BJ (cell line): ENCODE measurements at regions of chr7 and their contacts with region 1.

Region 1: DNA sequence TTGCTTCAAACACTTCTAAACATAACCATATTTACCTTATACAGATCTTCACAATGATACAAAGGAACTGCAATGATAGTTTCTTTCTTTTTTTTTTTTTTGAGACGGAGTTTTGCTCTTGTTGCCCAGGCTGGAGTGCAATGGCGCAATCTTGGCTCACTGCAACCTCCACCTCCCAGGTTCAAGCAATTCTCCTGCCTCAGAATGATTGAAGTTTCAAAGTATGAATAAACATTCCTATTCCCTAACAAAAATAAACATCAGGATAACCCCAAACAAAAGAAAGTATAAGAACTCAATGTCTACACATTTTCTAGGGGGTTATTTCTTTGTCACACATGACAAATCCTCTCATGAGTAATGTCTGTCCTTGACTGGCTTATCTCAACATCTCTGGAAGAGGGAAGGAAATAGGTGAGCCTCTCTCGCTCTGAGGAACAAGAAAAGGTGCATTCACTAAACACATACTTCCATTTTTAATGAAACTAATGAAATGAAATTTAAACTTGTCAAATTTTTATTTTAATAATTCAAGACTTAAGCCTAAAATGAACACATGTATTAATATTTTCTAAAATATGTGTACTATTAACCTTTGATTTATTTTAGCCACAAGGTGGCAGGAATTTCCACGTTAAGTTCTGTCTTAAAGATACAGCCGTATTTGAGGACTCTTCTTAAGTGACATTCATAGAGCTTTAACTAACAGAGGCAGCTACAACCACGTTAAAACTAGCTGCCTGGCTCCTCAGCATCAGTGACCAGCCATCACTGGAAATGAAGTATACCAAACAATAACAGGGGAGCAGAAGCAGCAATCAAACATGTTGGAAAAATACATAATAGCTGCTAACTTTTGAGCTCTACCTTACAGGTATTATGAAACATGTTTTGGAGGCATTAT is 58.3 kb downstream of the MALSU1 start:
- DNase-seq: no peak
- H3K4me3 ChIP-seq: no peak overlapping the region
- H3K27me3 ChIP-seq: no peaks in the 10 kb centered on the region
- CTCF ChIP-seq: 0 out of 2 replicates have a peak, but pooled peaks have one; percentile 8

Region 2: GRCh38 chr7:23373151-23374004 is 15.9 kb after region 1 on chr7:
- CTCF ChIA-PET with region 1: interaction called, 10 read pairs
- POLR2A ChIA-PET with region 1: no interaction called
- DNase-seq: no peak
- H3K4me3 ChIP-seq: no peak overlapping the region
- H3K27me3 ChIP-seq: no peaks in the 10 kb centered on the region; the same call in 1 of the 2 replicates
- CTCF ChIP-seq: no peak

Region 3: GRCh38 chr7:23462846-23463245 is 105.4 kb after region 1 on chr7:
- CTCF ChIA-PET with region 1: interaction called, 14 read pairs
- POLR2A ChIA-PET with region 1: no interaction called
- DNase-seq: no peak
- H3K4me3 ChIP-seq: no peak overlapping the region
- H3K27me3 ChIP-seq: peaks cover 12% of the 10 kb centered on the region
- CTCF ChIP-seq: peak; percentile 39